ENCODE measurements at regions of chr1 and their contacts with region 1.

Region 1: DNA sequence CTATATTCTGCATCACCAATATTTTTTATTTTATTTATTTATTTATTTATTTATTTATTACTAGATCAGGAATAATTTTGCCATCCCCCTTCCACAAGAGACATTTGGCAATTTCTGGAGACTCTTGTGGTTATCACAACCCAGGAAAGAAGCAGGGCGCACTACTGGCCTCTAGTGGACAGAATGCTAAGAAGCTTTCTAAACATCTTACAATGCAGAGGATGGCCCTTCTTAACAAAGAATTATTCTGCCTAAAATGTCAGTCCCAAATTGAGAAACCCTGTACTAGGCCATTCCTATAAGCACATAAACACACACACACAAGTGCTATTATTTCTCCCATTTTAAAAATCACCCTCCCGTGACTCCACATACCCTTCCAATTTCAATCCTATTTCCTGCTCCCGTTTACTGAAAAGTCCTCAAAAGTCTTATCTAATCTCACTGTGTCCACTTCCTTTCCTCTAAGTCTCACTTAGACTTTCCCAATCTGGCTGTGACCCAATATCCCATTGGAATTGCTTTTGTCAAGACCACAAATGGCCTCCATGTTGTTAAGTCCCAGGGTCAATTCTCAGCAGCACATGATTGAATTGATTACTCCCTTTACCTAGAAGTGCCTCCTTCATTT is 43.7 kb upstream of the RNF11 start:
- DNase-seq: no peak
- H3K4me3 ChIP-seq: no peak overlapping the region
- H3K27ac ChIP-seq: no peak overlapping the region
- H3K4me1 ChIP-seq: no peaks in the 10 kb centered on the region
- H3K27me3 ChIP-seq: no peaks in the 10 kb centered on the region
- CTCF ChIP-seq: peak; percentile 55 to 82 (median 64)
- POLR2A ChIP-seq: no peak

Region 2: GRCh38 chr1:50774759-50775351 is 417.5 kb before region 1 on chr1:
- intact Hi-C with region 1: loop called (anchors 10 kb)
- DNase-seq: no peak
- H3K4me3 ChIP-seq: no peak overlapping the region
- H3K27ac ChIP-seq: no peak overlapping the region
- H3K4me1 ChIP-seq: no peaks in the 10 kb centered on the region
- H3K27me3 ChIP-seq: no peaks in the 10 kb centered on the region
- CTCF ChIP-seq: peak; percentile 46 to 66 (median 62)
- POLR2A ChIP-seq: no peak

Region 3: DNA sequence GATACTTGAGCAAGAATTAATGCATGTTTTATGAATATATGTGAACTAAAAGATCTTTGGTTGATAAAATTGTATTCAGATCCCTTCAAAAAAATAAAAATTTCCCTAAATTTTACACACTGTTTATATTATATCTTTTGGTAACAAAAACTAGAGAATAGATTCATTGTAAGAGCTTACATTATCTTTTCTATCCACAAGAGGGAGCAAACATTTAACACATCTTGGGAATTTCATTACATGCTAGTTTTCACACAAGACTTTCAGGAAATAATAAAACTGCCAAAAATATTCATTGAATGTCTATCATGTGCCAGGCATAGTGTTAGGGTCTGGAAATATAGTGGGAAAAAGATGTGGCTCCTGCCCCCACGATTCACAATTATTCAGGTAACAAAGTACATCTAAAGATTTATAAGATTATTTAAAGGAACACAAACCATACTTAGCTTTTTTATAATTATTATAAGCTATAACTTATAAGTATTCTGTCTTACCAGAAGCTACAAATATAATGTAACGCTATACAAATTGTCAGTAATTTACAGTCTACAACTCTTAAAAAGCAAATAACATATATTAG is 262.9 kb before region 1 on chr1:
- intact Hi-C with region 1: loop called (anchors 10 kb)
- DNase-seq: no peak
- H3K4me3 ChIP-seq: no peak overlapping the region
- H3K27ac ChIP-seq: no peak overlapping the region
- H3K4me1 ChIP-seq: peaks cover 0 to 4% (median 0%) of the 10 kb centered on the region in 3 donors
- H3K27me3 ChIP-seq: no peaks in the 10 kb centered on the region
- CTCF ChIP-seq: peak in 5 of 6 experiments; percentile 38 to 65 (median 55)
- POLR2A ChIP-seq: no peak

Region 4: DNA sequence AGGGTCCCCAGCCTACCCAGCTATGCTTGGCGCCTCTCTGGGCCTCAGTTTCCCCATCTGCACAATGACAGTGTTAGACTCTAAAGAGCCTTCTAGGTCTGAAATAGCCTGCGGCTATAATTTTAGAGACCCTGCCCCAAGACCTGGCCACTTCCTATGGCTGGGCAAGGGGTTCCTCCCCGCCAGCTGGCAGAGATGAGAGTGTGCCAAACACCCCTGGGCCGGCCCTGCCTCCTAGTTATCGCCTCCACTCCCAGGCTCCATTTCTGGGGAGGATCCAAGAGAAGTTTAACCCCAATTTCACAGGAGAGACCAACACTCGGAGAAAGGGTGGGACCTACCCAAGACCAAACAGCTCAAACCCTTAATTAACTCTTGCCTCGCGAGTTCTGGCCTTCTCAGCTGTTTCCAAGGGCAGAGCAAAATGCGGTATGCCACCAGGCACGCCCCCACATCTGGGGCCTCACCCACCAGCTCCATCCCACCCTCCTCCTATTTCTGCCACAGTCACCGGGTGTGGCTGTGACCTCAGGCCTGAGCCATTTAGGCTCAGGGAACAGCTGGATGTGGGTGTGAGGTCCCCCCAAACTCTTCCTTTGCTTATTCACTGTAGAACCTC is 102.3 kb after region 1 on chr1:
- intact Hi-C with region 1: loop called (anchors 5 kb)
- DNase-seq: no peak
- H3K4me3 ChIP-seq: no peak overlapping the region
- H3K27ac ChIP-seq: no peak overlapping the region
- H3K4me1 ChIP-seq: peaks cover 0 to 18% (median 4%) of the 10 kb centered on the region in 3 donors
- H3K27me3 ChIP-seq: no peaks in the 10 kb centered on the region
- CTCF ChIP-seq: no peak
- POLR2A ChIP-seq: no peak

Region 5: GRCh38 chr1:51648180-51649109 is 456.1 kb after region 1 on chr1:
- intact Hi-C with region 1: no loop called
- DNase-seq: no peak
- H3K4me3 ChIP-seq: no peak overlapping the region
- H3K27ac ChIP-seq: peak overlapping the region in 2 of 4 donors; percentile 26 to 60
- H3K4me1 ChIP-seq: peaks cover 0 to 59% (median 23%) of the 10 kb centered on the region in 3 donors
- H3K27me3 ChIP-seq: no peaks in the 10 kb centered on the region
- CTCF ChIP-seq: no peak
- POLR2A ChIP-seq: no peak

Measured in esophagus squamous epithelium (tissue), 5 donors.